ENCODE measurements at regions of chr7 and their contacts with region 1.

Region 1: DNA sequence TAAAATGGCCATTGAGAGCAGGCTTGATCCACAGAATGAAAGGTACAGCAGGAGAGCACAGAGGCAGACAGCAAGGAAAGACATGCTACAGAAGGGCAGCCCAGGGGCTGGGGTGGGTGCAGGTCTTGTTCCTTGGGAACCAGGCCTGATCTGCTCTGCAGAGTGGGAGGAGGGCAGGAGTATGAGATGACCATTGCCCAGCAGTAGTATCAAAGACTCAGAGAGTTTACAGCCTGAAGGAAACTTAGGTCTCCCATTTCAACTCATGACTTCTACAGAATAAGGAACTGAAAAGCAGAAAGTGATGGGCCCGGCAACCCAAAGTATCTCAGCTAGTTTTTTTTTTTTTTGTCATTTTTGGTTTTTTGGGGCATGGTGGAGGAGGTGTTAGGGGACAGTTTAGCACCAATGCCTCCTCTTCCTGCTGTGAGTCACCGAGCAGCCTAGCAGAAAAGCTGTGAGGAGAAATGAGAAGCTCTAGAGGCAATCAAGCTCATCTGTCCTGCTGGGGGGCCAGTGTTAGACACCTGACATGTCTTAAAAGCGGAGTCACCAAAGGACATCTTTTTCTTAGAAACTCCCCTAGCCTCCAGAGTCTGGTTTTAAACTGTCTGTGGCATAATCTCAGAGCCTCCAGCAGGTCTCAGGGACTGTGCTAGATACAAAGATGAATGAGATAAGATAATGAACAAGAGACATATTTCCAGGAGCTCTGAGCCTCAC is 34.3 kb upstream of the HERPUD2 start:
- DNase-seq: peak; percentile 94
- H3K4me3 ChIP-seq: peak overlapping the region; percentile 65
- H3K27ac ChIP-seq: peak overlapping the region; percentile 100
- H3K4me1 ChIP-seq: peaks cover 97% of the 10 kb centered on the region
- CTCF ChIP-seq: no peak

Region 2: GRCh38 chr7:35605760-35606159 is 123.5 kb before region 1 on chr7:
- CTCF ChIA-PET with region 1: no interaction called
- POLR2A ChIA-PET with region 1: no interaction called
- intact Hi-C with region 1: no loop called
- DNase-seq: no peak
- H3K4me3 ChIP-seq: no peak overlapping the region
- H3K27ac ChIP-seq: no peak overlapping the region
- H3K4me1 ChIP-seq: no peaks in the 10 kb centered on the region
- CTCF ChIP-seq: no peak

Region 3: DNA sequence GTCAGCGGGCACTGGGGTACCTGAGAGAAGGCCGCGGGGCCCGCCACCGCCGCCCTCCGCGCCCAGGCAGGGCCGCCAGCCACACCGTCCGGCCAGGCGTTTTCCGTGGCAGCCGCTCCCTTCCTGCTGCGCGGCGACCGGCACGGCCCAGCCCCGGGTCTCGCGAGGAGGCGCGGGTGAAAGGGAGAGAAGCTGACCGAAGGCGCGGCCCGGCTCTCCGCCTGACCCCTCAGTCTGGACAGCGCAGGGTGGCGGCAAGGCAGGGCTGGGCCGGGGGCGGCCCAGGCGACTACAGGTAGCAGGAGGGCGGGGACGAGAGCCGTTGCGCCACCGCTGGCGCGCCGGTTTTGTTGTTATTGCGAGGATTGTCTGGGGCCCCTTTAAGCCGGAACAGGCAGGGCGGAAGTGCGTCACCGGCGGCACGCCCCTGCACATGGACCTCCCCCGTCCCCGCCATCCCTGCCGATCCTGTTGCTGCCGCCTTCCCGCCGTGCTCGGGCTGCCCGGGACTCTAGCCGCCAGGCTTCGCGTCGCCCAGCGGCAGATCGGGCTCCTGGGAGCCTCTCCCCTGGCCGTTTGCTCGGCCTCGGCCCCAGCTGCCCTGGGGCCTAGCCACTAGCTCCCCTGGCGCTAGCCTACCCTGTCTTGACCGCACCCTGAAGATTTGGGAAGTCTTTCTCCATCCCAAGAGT is 34.3 kb before region 1 on chr7 and contains the start of gene HERPUD2:
- CTCF ChIA-PET with region 1: interaction called, 3 read pairs
- POLR2A ChIA-PET with region 1: interaction called, 98 read pairs
- intact Hi-C with region 1: loop called (anchors 1 kb)
- DNase-seq: peak; percentile 92
- H3K4me3 ChIP-seq: peak within 1 kb of the TSS; percentile 87
- H3K27ac ChIP-seq: peak within 1 kb of the TSS; percentile 52
- H3K4me1 ChIP-seq: peaks cover 41% of the 10 kb centered on the region
- CTCF ChIP-seq: no peak
- total RNA-seq, gene HERPUD2: 11.9 and 18.8 TPM in 2 replicates

Region 4: GRCh38 chr7:35707422-35707821 is 21.8 kb before region 1 on chr7:
- CTCF ChIA-PET with region 1: interaction called, 6 read pairs
- POLR2A ChIA-PET with region 1: interaction called, 148 read pairs
- intact Hi-C with region 1: loop called (anchors 2 kb)
- DNase-seq: no peak
- H3K4me3 ChIP-seq: no peak overlapping the region
- H3K27ac ChIP-seq: no peak overlapping the region
- H3K4me1 ChIP-seq: peaks cover 21% of the 10 kb centered on the region
- CTCF ChIP-seq: no peak

Region 5: DNA sequence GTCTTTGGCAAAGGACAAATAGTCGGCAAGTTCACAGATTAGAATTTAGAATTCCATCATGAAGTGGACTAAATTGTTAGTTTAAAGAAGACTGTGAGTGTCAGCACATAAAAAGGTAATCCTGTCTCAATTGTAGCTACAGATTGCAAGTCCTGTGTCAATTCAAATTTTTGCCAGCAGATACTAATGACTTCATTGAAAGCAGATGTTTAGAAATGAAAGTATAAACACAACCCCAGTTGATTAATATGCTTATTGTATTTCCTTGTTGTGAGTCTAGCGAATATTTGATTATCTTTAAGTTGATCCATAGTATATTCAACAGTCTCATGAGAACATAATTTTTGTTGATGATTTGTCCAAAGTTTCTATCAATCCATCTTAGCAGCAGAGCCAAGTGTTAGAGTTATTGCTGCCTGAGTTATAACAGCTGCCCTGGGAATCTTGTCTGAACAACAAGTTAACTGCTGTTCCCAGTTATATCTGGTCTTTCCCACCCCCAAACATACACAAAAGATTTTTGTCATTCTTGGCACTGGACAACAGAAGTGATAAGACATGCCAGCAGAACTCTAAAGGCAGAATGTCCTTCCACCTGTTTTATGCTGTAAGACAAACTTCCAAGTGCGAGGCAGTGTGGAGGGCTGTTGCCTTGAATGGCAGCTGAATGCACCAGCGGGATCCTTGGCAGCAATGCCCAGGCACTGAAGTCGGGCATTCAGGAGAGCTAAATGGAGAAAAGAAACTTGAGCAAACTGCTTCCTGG is 13.0 kb before region 1 on chr7:
- CTCF ChIA-PET with region 1: interaction called, 4 read pairs
- POLR2A ChIA-PET with region 1: interaction called, 148 read pairs
- intact Hi-C with region 1: loop called (anchors 1 kb)
- DNase-seq: no peak
- H3K4me3 ChIP-seq: peak overlapping the region; percentile 4
- H3K27ac ChIP-seq: peak overlapping the region; percentile 1
- H3K4me1 ChIP-seq: peaks cover 58% of the 10 kb centered on the region
- CTCF ChIP-seq: no peak

Region 6: GRCh38 chr7:36152756-36153570 is 423.7 kb after region 1 on chr7 and contains the start of gene EEPD1:
- CTCF ChIA-PET with region 1: no interaction called
- POLR2A ChIA-PET with region 1: no interaction called
- intact Hi-C with region 1: loop called (anchors 10 kb)
- DNase-seq: peak; percentile 97
- H3K4me3 ChIP-seq: peak within 1 kb of the TSS; percentile 76
- H3K27ac ChIP-seq: no peak within 1 kb of the TSS
- H3K4me1 ChIP-seq: peaks cover 25% of the 10 kb centered on the region
- CTCF ChIP-seq: no peak
- total RNA-seq, gene EEPD1: 1.7 and 5.1 TPM in 2 replicates

Measured in OCI-LY7 (cell line).